ENCODE measurements at regions of chr14 and their contacts with region 1.

Region 1: GRCh38 chr14:35121887-35122695 is at the starts of genes PPP2R3C and PRORP:
- DNase-seq: peak; percentile 99
- H3K4me3 ChIP-seq: peak within 1 kb of the TSS; percentile 54 to 67 (median 61)
- H3K27ac ChIP-seq: peak within 1 kb of the TSS; percentile 99
- H3K4me1 ChIP-seq: peaks cover 11% of the 10 kb centered on the region
- H3K27me3 ChIP-seq: no peaks in the 10 kb centered on the region
- CTCF ChIP-seq: no peak
- total RNA-seq, gene PPP2R3C: 12.2 to 18.7 TPM
- total RNA-seq, gene PRORP: 33.5 to 53.2 TPM

Region 2: DNA sequence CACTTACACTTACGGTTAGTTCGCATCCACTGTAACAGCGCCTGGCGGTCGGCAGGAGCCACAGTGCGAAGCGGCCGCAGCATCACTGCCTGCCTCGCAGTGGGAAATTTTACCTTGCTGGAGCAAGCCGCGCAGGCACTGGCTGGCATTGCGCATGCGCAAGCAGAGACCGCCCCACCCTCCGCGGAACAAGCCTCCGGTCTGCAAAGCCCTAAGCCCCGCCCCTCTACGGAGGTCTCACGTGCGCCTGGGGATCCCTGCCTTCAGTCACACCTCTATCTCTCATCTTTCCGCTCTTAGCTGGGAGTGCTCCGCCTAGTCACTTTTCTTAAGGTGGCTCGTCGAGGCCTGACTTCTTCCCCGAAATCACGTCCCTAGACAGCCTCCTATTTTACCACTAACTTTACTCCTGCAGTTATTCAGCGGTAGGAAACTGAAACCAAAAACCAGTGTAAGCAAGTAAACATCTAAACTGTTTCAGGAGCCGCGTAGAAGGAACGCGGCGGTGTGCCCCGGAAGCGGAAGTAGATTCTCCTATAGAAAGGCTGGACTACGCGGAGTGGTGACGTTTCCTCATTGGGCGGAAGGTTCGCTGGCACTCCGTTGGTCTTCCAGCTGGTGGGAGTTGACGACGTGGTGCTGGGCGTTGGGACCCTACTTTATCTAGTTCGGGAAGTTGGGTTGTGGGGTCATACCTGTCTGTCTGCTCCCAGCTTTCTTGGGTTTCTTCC is 139.5 kb before region 1 on chr14 and contains the start of gene SRP54:
- CTCF ChIA-PET with region 1: no interaction called
- dilution Hi-C with region 1: no loop called
- in situ Hi-C with region 1: no loop called
- intact Hi-C with region 1: loop called (anchors 1 kb)
- DNase-seq: peak; percentile 97
- H3K4me3 ChIP-seq: peak within 1 kb of the TSS; percentile 70 to 91 (median 90)
- H3K27ac ChIP-seq: peak within 1 kb of the TSS; percentile 91
- H3K4me1 ChIP-seq: peaks cover 14% of the 10 kb centered on the region
- H3K27me3 ChIP-seq: no peaks in the 10 kb centered on the region
- CTCF ChIP-seq: peak in 1 of 2 donors; percentile 44
- total RNA-seq, gene SRP54: 51.3 to 61.4 TPM

Region 3: DNA sequence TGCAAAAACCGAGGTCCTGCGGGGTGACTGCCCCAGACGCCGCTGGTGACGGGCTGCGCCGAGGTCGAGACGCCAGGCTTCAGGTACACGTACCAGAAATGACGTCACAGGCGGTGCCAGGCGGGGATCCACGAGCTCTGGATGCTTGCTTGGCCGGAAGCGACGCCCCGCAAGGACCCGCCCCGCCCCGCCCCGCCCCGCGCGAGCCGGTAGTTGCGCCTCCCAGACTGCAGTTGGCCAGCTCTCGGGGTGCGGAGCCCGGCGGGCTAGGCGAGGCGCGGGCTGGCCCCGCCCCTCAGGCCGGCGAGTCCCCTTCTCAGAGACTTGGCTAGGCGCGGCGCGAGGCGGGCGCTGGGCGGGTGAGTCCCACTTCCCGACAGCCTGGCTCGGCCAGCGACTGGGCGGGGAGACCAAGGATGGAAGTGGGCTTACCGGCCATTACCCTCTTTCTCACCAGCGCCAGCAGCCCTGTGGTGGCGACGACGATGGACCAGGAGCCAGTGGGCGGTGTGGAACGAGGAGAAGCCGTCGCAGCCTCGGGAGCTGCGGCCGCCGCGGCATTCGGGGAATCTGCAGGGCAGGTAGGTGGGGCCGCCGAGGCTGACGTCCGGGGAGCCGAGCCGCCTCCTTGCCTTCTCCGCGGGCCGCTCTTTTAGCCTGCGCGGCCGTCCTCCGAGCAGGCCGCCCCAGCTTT is 75.9 kb before region 1 on chr14 and contains the start of gene FAM177A1:
- CTCF ChIA-PET with region 1: no interaction called
- dilution Hi-C with region 1: loop called (anchors 5 kb)
- in situ Hi-C with region 1: no loop called
- intact Hi-C with region 1: loop called (anchors 1 kb)
- DNase-seq: peak; percentile 98
- H3K4me3 ChIP-seq: peak within 1 kb of the TSS; percentile 88 to 98 (median 91)
- H3K27ac ChIP-seq: peak within 1 kb of the TSS; percentile 97
- H3K4me1 ChIP-seq: peaks cover 11% of the 10 kb centered on the region
- H3K27me3 ChIP-seq: no peaks in the 10 kb centered on the region
- CTCF ChIP-seq: no peak
- total RNA-seq, gene FAM177A1: 30.2 to 84.2 TPM

Region 4: DNA sequence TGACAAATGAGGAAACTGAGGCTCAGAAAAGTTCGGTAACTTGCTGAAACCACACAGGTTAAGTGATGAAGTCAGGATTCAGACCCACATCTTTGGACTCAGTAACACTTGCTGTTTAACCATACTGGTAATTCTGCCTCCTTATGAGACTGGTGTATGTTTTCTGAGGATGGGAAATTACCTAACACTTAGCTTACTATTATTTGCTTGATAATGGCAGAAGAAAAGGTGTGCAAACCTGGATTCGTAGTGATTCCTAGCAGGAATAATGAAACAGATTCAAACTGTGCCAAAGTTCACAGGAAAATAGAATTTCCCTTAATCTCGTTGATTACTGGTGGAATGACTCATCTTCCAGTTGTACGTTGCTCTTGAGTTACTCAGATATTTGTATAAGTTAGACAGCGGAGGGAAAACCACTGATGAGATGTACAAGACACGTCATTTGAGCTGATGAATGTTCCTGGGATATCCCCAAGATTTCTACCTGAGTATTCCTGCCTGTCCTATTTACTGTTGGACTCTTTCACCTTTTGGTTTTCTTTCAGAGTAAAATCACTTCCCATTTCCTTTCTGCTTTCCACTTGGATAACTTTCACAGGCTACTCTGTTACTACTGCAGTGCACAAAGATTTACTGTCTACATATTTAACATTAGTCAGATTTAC is 37.8 kb after region 1 on chr14:
- CTCF ChIA-PET with region 1: no interaction called
- dilution Hi-C with region 1: no loop called
- in situ Hi-C with region 1: no loop called
- intact Hi-C with region 1: loop called (anchors 5 kb)
- DNase-seq: peak; percentile 98
- H3K4me3 ChIP-seq: no peak overlapping the region
- H3K27ac ChIP-seq: peak overlapping the region; percentile 84
- H3K4me1 ChIP-seq: peaks cover 34% of the 10 kb centered on the region
- H3K27me3 ChIP-seq: no peaks in the 10 kb centered on the region
- CTCF ChIP-seq: no peak

Region 5: GRCh38 chr14:35215110-35215876 is 93.2 kb after region 1 on chr14:
- CTCF ChIA-PET with region 1: no interaction called
- dilution Hi-C with region 1: no loop called
- in situ Hi-C with region 1: no loop called
- intact Hi-C with region 1: loop called (anchors 1 kb)
- DNase-seq: peak; percentile 31
- H3K4me3 ChIP-seq: no peak overlapping the region
- H3K27ac ChIP-seq: peak overlapping the region; percentile 70
- H3K4me1 ChIP-seq: peaks cover 28% of the 10 kb centered on the region
- H3K27me3 ChIP-seq: no peaks in the 10 kb centered on the region
- CTCF ChIP-seq: peak; percentile 19 to 51

Region 6: GRCh38 chr14:35292051-35292769 is 170.1 kb after region 1 on chr14 and contains the start of gene PSMA6:
- CTCF ChIA-PET with region 1: no interaction called
- dilution Hi-C with region 1: no loop called
- in situ Hi-C with region 1: no loop called
- intact Hi-C with region 1: loop called (anchors 2 kb)
- DNase-seq: peak; percentile 99
- H3K4me3 ChIP-seq: peak within 1 kb of the TSS; percentile 70 to 91 (median 86)
- H3K27ac ChIP-seq: peak within 1 kb of the TSS; percentile 84
- H3K4me1 ChIP-seq: peaks cover 14% of the 10 kb centered on the region
- H3K27me3 ChIP-seq: no peaks in the 10 kb centered on the region
- CTCF ChIP-seq: no peak
- total RNA-seq, gene PSMA6: 128 to 181 TPM